ENCODE measurements at regions of chr3 and their contacts with region 1.

Region 1: GRCh38 chr3:69306239-69307185 is 79.4 kb downstream of the FRMD4B start:
- DNase-seq: peak; percentile 85
- H3K4me3 ChIP-seq: no peak overlapping the region
- H3K27ac ChIP-seq: no peak overlapping the region
- H3K4me1 ChIP-seq: peaks cover 12% of the 10 kb centered on the region
- H3K27me3 ChIP-seq: no peaks in the 10 kb centered on the region
- CTCF ChIP-seq: peak; percentile 89 to 92
- POLR2A ChIP-seq: no peak

Region 2: DNA sequence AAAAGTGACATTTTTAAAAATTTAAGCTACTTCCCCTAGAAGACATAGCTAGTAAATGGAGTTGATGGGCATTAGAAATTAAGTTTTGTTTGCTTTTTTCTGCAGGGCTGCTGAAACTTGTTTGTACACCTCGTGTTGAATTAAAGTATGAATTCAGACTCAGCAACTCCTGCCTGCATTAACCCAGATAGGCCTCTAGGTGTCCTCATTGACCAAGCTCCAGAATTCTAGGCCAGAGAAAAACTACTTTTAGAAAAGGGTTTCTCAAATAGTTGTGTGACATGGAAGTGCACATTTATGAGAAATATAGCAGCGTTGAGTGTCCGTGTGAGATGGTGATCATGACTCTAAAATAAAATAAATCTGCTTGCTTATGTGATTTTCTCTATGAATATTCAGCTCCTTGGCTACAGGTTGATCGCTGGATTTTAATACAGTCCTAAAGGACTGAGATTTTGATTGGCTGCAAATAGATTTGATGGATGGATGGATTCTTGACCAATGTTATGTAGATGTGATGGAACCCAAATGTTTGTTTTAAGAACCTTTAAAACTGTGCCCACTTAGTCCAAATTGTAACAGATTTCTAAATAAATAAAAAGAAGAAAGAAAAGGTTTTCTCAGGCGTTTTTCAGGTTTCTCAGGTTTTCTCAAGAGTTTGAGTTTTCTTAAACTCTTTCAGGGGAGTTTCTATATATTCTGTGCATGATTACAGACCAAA is 144.8 kb before region 1 on chr3:
- CTCF ChIA-PET with region 1: interaction called, 230 read pairs
- POLR2A ChIA-PET with region 1: no interaction called
- dilution Hi-C with region 1: no loop called
- intact Hi-C with region 1: loop called (anchors 1 kb)
- DNase-seq: peak; percentile 65
- H3K4me3 ChIP-seq: no peak overlapping the region
- H3K27ac ChIP-seq: no peak overlapping the region
- H3K4me1 ChIP-seq: no peaks in the 10 kb centered on the region
- H3K27me3 ChIP-seq: peaks cover 0 to 1% of the 10 kb centered on the region in 2 experiments
- CTCF ChIP-seq: peak; percentile 75
- POLR2A ChIP-seq: no peak

Region 3: DNA sequence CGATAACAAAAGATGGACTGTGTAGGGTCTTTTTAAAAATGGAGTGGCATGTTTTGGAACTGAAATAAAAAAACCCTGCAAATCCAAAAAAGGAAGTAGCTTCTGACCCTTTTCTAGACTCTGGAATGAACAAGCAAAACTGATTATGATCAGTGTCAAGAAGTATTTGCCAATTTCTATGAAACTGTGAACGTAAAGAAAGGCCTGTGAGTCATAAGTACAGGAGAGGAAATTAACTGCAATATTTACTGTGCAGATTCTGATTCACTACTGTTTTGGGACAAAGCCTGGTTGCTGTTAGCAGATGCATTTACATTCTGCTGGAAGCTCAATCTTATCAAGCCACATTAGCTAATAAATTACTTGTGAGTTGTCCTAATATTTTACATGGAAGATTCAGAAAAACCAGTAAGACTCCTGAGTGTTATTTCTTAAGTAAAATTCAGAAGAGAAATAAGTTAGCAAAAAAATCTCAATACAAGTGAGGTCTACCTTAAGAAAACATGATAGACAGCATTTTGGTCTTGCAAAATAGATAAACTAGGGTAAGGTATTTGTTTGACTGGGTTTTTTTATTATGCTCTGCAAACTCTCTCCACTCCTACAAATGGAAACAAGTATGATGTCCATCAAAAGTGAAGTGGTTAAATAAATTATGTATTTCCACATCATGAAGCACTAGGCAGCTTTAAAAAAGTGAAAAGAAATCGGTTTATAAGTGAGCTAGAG is 93.9 kb before region 1 on chr3:
- CTCF ChIA-PET with region 1: interaction called, 10 read pairs
- POLR2A ChIA-PET with region 1: no interaction called
- dilution Hi-C with region 1: no loop called
- intact Hi-C with region 1: loop called (anchors 2 kb)
- DNase-seq: peak; percentile 94
- H3K4me3 ChIP-seq: no peak overlapping the region
- H3K27ac ChIP-seq: peak overlapping the region; percentile 68
- H3K4me1 ChIP-seq: peaks cover 39% of the 10 kb centered on the region
- H3K27me3 ChIP-seq: no peaks in the 10 kb centered on the region
- CTCF ChIP-seq: no peak
- POLR2A ChIP-seq: no peak

Region 4: GRCh38 chr3:69294014-69294775 is 12.3 kb before region 1 on chr3:
- CTCF ChIA-PET with region 1: interaction called, 39 read pairs
- POLR2A ChIA-PET with region 1: no interaction called
- dilution Hi-C with region 1: no loop called
- intact Hi-C with region 1: no loop called
- DNase-seq: no peak
- H3K4me3 ChIP-seq: no peak overlapping the region
- H3K27ac ChIP-seq: no peak overlapping the region
- H3K4me1 ChIP-seq: peaks cover 20% of the 10 kb centered on the region
- H3K27me3 ChIP-seq: no peaks in the 10 kb centered on the region
- CTCF ChIP-seq: no peak
- POLR2A ChIP-seq: no peak

Region 5: GRCh38 chr3:69385723-69386555 is 79.4 kb after region 1 on chr3 and contains the start of gene FRMD4B:
- CTCF ChIA-PET with region 1: interaction called, 19 read pairs
- POLR2A ChIA-PET with region 1: no interaction called
- dilution Hi-C with region 1: no loop called
- intact Hi-C with region 1: no loop called
- DNase-seq: peak; percentile 74
- H3K4me3 ChIP-seq: peak within 1 kb of the TSS; percentile 18 to 50 (median 33)
- H3K27ac ChIP-seq: no peak within 1 kb of the TSS
- H3K4me1 ChIP-seq: peaks cover 17% of the 10 kb centered on the region
- H3K27me3 ChIP-seq: no peaks in the 10 kb centered on the region
- CTCF ChIP-seq: peak; percentile 38 to 50
- POLR2A ChIP-seq: no peak
- total RNA-seq, gene FRMD4B: 77.7 and 89.7 TPM in 2 replicates

Region 6: DNA sequence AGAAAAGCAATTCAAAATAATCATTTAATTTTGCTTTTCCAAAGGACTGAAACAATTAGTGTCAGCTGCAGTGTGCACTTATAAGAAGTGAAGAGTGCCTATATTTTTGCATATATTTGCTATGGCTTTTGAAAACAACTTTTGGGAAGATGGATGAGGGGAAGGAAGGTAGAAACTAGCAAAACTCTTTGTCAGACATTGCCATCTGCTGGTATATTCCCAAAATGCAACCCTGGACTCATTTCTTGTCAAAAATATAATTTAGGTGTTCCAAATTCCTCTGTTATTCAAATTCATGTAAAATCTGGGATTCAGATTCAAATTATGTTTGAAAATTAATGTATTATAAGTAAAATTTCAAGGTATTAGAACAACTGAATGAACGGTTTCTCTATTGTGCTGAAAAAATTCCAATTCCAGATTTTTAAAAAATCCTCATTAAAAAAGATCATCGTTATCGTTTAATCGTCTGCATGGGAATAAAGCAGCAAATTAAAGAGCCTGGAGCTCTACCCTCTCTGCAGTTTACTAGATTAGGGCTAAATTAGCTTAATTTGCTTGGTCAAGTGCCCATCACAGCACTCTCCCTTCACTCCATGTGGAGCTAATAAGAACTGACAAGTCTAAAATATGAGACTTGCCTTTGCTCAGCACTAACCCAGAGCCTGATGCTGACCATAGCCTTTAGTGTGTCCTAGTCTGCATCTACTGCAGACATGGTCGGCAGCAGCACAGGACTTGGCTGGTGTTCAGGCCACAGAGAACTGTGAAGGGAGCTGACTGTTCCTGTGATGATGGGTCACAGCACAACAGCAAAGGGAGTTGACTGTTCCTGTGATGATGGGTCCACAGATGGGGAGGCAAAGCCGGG is 364.8 kb after region 1 on chr3:
- CTCF ChIA-PET with region 1: interaction called, 12 read pairs
- POLR2A ChIA-PET with region 1: no interaction called
- dilution Hi-C with region 1: no loop called
- intact Hi-C with region 1: loop called (anchors 1 kb)
- DNase-seq: peak; percentile 62
- H3K4me3 ChIP-seq: no peak overlapping the region
- H3K27ac ChIP-seq: no peak overlapping the region
- H3K4me1 ChIP-seq: peaks cover 4% of the 10 kb centered on the region
- H3K27me3 ChIP-seq: no peaks in the 10 kb centered on the region
- CTCF ChIP-seq: peak; percentile 48 to 59
- POLR2A ChIP-seq: no peak

Measured in endothelial cell of umbilical vein (primary cell).